ENCODE measurements at regions of chr15 and their contacts with region 1.

Region 1: DNA sequence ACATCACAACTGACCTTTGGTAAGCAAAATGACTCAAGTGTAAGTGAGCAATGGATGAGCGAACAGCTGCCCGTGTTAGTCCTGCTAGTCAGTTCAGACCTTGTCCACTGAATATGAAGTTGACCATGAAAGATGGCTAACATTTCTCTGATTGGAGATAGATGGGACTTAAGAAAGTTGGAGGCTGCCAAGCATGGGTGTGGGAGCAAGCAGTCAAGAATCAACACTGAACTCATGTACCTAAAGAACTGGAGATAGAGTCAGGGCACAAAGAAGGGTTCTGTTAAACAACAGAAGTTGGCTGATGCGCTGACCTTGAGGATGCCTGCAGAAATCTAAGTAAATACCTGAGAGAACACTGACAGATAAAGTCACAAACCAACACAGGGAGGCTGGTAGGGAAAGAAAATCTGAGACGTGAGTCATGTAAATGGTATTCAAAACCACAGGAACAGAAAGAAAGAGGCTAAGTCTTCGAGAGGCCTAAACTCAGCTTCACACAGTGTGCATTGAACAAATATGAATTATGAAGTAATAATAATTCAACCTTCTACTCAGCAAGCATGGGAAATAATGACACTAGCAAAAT is 30.7 kb upstream of the ANPEP start:
- DNase-seq: peak; percentile 91
- H3K4me3 ChIP-seq: no peak overlapping the region
- H3K27ac ChIP-seq: peak overlapping the region; percentile 69
- H3K4me1 ChIP-seq: peaks cover 42% of the 10 kb centered on the region
- H3K27me3 ChIP-seq: no peaks in the 10 kb centered on the region
- CTCF ChIP-seq: no peak

Region 2: DNA sequence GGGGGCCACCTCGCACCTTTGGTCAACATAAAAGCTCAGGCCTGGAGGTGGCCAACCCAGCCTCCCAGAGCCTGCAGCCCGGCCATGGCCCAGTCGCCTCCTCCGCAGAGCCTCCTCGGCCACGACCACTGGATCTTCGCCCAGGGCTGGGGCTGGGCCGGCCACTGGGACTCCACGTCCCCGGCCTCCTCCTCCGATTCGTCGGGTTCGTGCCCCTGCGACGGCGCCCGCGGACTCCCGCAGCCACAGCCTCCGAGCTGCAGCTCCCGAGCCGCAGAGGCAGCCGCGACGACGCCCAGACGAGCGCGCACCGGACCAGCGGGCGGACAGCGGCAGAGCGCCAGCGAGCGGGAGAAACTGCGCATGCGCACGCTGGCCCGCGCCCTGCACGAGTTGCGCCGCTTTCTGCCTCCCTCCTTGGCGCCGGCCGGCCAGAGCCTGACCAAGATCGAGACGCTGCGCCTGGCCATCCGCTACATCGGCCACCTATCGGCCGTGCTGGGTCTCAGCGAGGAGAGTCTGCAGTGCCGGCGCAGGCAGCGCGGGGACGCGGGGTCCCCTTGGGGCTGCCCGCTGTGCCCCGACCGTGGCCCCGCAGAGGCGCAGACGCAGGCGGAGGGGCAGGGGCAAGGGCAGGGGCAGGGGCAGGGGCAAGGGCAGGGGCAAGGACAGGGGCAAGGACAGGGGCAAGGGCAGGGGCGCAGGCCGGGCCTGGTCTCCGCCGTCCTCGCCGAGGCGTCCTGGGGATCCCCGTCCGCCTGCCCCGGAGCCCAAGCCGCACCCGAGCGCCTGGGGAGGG is 68.9 kb before region 1 on chr15 and contains the start of gene MESP2:
- CTCF ChIA-PET with region 1: interaction called, 7 read pairs
- dilution Hi-C with region 1: no loop called
- in situ Hi-C with region 1: no loop called
- intact Hi-C with region 1: loop called (anchors 5 kb)
- DNase-seq: peak; percentile 48
- H3K4me3 ChIP-seq: peak within 1 kb of the TSS in 2 of 3 experiments; percentile 37 to 40
- H3K27ac ChIP-seq: no peak within 1 kb of the TSS
- H3K4me1 ChIP-seq: peaks cover 43% of the 10 kb centered on the region
- H3K27me3 ChIP-seq: no peaks in the 10 kb centered on the region
- CTCF ChIP-seq: peak in 1 of 2 donors; percentile 25
- total RNA-seq, gene MESP2: 0.31 TPM in 1 of 2 donors, not detected in the other

Region 3: DNA sequence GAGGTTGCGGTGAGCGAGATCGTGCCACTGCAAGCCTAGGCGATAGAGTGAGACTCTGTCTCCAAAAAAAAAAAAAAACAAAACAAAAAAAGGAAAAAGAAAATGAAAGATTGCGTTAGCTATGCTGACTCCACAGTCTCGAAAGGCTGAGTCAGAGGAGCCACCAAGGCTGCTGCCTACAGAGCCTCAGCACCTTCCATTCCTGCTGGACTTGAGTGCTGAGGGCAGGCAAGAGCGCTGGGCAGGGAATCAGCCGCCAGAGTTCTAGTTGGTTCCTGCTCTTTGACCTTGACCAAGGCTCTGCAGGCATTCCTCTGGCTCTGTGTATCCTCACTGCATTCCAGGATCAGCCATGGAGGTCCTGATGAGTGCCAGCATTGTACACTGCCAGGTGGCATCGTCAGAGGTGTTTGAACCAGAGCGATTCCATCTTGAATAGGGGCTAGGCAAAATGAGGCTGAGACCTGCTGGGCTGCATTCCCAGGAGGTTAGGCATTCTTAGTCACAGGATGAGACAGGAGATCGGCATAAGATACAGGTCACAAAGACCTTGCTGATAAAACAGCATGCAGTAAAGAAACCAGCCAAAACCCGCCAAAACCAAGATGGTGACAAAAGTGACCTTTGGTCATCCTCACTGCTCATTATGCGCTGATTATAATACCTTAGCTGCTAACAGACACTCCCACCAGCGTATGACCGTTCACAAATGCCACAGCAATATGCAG is 63.3 kb before region 1 on chr15:
- CTCF ChIA-PET with region 1: no interaction called
- dilution Hi-C with region 1: no loop called
- in situ Hi-C with region 1: no loop called
- intact Hi-C with region 1: loop called (anchors 2 kb)
- DNase-seq: peak; percentile 94
- H3K4me3 ChIP-seq: no peak overlapping the region
- H3K27ac ChIP-seq: peak overlapping the region; percentile 59
- H3K4me1 ChIP-seq: peaks cover 41% of the 10 kb centered on the region
- H3K27me3 ChIP-seq: no peaks in the 10 kb centered on the region
- CTCF ChIP-seq: no peak

Region 4: DNA sequence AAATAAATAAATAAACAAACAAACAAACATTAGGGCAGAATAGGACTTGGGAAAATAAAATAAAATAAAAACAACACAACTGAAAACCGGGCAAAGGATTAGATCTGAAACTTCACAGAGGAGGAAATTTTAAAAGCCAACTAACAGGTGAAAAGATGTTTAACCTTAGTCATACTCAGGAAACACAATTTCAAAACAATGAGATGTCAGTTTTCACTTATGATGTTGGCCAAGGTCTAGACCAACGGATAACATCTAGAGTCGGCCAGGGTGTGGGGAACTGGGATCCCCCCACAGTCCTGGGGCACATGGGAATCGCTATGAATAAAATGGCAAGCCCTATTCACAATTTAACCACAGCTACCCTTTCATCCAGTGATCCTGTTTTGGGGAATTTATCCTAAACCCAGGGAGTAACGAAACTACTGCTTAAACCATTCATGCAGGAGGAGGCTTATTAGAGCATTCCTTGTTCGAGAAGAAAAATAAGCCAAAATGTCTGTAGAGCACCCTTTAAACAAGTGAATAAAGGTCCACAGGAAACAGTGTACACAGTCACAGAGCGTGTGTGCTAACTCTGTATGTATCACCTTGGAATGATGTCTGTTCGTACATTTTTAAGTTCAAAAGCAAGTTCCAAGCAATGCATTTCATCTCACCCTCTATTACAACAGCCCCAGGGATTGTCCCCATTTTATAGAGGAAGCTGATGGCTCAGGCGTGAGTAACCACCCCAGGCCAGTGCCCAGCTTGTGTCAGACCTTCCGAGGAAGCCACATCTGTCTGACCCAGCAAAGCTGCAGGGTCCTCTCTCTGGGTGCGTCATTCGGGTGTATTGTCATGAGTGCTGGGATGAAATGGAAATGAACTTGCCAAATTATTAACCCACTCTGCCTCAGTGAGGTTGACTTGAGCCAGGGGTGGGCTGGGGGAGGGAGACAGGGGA is 24.5 kb before region 1 on chr15:
- CTCF ChIA-PET with region 1: no interaction called
- dilution Hi-C with region 1: no loop called
- in situ Hi-C with region 1: no loop called
- intact Hi-C with region 1: loop called (anchors 2 kb)
- DNase-seq: peak; percentile 86
- H3K4me3 ChIP-seq: no peak overlapping the region
- H3K27ac ChIP-seq: peak overlapping the region; percentile 31
- H3K4me1 ChIP-seq: peaks cover 45% of the 10 kb centered on the region
- H3K27me3 ChIP-seq: no peaks in the 10 kb centered on the region
- CTCF ChIP-seq: no peak

Region 5: GRCh38 chr15:89964232-89964954 is 119.0 kb after region 1 on chr15:
- CTCF ChIA-PET with region 1: no interaction called
- dilution Hi-C with region 1: no loop called
- in situ Hi-C with region 1: no loop called
- intact Hi-C with region 1: no loop called
- DNase-seq: no peak
- H3K4me3 ChIP-seq: no peak overlapping the region
- H3K27ac ChIP-seq: no peak overlapping the region
- H3K4me1 ChIP-seq: no peaks in the 10 kb centered on the region
- H3K27me3 ChIP-seq: no peaks in the 10 kb centered on the region
- CTCF ChIP-seq: no peak

Region 6: DNA sequence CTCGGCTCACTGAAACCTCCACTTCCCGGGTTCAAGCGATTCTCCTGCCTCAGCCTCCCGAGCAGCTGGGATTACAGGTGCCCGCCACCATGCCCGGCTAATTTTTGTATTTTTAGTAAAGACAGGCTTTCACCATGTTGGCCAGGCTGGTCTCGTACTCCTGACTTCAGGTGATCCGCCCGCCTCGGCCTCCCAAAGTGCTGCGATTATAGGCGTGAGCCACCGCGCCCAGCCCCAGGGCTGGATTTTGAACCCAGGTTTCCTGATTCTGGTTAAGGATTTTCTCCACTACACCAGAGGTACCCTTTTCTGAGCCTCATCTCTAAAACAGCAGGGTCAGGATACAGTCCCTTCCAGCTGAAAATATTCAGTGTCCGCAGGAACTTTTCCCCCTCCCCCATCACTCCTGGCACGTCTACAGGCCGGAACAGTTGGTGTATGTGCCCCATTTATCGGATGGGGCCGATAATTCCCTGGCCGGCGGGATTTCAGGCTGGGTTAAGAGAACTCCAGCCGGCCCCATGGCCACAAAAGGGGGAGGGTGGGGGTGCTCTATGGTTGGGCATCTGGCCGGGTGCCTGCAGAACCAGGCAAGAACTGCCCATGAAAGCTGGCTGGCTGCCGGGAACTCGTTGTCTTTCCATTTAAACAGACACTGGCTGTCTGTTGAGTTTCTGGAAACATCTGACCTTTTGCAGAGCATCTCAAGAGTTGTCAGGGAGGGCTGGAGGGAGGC is 328.9 kb after region 1 on chr15:
- CTCF ChIA-PET with region 1: no interaction called
- dilution Hi-C with region 1: no loop called
- in situ Hi-C with region 1: no loop called
- intact Hi-C with region 1: no loop called
- DNase-seq: peak; percentile 22
- H3K4me3 ChIP-seq: no peak overlapping the region
- H3K27ac ChIP-seq: no peak overlapping the region
- H3K4me1 ChIP-seq: no peaks in the 10 kb centered on the region
- H3K27me3 ChIP-seq: no peaks in the 10 kb centered on the region
- CTCF ChIP-seq: no peak